SK-N-SH (cell line): ENCODE measurements at regions of chr21 and their contacts with region 1.

Region 1: GRCh38 chr21:42593007-42593806 is 60.2 kb upstream of the PDE9A start:
- DNase-seq: peak; percentile 95
- H3K4me3 ChIP-seq: peak overlapping the region in 1 of 2 experiments; percentile 35; a peak in 1 of 4 replicates
- H3K27ac ChIP-seq: no peak overlapping the region
- H3K4me1 ChIP-seq: peaks cover 0 to 4% of the 10 kb centered on the region in 2 experiments; a peak in 1 of 4 replicates
- H3K27me3 ChIP-seq: no peaks in the 10 kb centered on the region
- CTCF ChIP-seq: no peak; the same call in 1 of the 2 replicates
- EP300 ChIP-seq: no peak
- RAD21 ChIP-seq: peak; percentile 85

Region 2: DNA sequence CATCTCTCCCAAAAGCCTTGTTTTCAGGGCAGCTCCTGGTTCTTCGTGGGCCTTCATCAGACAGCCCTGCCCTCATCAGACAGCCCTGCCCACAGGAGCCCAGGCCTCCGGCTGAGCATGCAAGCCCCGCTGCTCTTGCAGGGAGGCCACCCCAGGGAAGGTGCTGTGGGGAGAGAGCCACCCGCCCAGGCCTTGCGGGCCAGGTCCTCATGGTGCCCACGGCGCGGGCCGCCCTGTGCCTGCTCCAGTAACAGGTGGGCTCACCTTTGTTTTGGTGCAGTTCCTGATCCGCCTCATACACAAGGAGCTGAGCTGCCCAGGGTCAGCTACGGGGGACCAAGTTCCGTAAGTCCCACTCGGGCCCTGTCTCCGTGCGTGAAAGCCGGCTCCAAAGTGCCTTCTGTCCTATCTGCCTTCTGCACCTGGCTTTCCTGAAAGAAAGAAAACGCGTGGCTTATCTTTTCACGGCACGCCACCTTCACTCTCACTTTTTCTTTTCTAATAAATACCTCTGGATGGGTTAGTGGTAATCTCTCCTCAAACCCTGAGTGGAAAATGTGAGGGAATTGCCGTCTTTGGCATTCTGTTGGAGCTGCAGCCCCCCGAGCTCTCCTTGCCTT is 13.6 kb before region 1 on chr21:
- CTCF ChIA-PET with region 1: interaction called, 29 read pairs
- POLR2A ChIA-PET with region 1: no interaction called
- DNase-seq: no peak
- H3K4me3 ChIP-seq: no peak overlapping the region
- H3K27ac ChIP-seq: no peak overlapping the region
- H3K4me1 ChIP-seq: no peaks in the 10 kb centered on the region
- H3K27me3 ChIP-seq: no peaks in the 10 kb centered on the region
- CTCF ChIP-seq: no peak
- EP300 ChIP-seq: no peak
- RAD21 ChIP-seq: no peak

Region 3: DNA sequence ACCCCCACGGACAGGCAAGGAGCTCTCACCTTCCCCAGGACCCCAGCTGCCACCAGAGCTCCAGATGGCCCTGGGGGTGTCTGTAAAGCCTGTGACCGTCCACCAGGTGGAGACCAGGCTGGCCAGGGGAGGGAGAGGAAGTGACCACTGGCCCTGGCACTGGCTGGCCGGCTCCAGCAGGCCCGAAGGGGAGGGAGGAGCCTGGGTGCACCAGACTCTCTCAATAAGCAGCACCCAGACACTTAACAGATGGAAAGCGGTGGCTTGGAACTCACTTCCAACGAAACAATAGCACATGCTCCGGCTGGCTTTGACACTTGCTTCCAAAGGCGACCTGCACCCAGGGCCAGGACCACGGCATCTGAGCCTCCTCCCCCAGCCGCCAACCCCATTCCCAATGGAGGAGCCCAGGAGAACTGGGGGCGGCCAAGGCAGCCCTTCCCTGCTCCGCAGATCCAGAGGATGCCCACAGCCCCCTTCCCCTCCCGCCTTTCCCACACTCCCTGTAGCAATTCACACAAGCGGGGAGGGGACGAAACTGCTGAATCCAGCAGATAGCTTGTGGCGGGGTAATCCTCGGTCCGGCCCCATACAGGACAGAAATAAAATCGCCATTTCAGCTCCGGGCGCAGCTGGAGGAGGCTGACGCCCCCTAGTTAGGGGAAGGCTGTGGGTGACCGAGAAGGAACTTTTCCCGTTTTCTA is 59.5 kb after region 1 on chr21:
- CTCF ChIA-PET with region 1: interaction called, 19 read pairs
- POLR2A ChIA-PET with region 1: no interaction called
- DNase-seq: peak; percentile 98
- H3K4me3 ChIP-seq: peak overlapping the region in 1 of 2 experiments; percentile 43; a peak in 3 of 4 replicates
- H3K27ac ChIP-seq: peak overlapping the region in 1 of 2 experiments; percentile 98; a peak in 2 of 4 replicates
- H3K4me1 ChIP-seq: peaks cover 0 to 33% of the 10 kb centered on the region in 2 experiments; a peak in 1 of 4 replicates
- H3K27me3 ChIP-seq: peaks cover 35% of the 10 kb centered on the region
- CTCF ChIP-seq: peak; percentile 35
- EP300 ChIP-seq: peak in 1 of 2 experiments; percentile 69; a peak in 2 of 4 replicates
- RAD21 ChIP-seq: peak; percentile 74

Region 4: DNA sequence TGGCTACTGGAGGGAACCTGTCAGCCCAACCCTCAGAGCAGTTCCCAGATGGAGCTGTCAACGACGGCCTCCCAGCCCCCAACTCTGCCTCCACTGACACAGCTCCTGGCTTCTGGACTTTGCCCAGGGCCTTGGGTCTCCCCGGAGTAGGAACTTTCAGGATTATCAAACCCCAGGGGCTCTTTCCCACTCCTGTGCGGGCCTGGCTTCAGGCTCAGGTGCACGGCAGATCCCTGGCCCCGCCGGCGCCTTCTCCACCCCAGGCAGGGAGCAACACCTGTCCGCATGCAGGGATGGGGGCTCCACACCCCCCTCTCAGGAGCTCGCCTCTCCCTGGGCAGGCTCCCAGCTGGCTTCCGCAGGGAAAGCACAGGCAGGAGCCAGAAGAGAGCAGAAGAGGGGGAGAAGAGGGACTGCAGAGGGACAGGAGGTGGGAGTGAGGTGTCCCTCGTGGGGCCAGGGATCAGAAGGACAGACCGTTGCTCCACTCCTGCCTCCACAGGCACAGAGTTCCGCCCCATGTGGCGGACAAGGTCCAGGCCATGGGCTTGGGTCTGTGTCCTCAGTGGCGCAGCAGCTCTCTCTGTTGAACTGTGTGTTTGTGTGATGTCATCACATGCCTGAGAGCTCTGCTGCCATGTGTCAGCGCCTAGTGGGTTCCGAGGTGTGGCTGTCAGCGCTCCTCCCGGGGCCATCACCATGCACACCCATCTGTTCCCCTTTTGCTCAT is 167.9 kb after region 1 on chr21:
- CTCF ChIA-PET with region 1: no interaction called
- POLR2A ChIA-PET with region 1: no interaction called
- DNase-seq: no peak
- H3K4me3 ChIP-seq: no peak overlapping the region
- H3K27ac ChIP-seq: no peak overlapping the region
- H3K4me1 ChIP-seq: no peaks in the 10 kb centered on the region
- H3K27me3 ChIP-seq: no peaks in the 10 kb centered on the region
- CTCF ChIP-seq: no peak
- EP300 ChIP-seq: no peak
- RAD21 ChIP-seq: no peak

Region 5: GRCh38 chr21:42827588-42827987 is 234.4 kb after region 1 on chr21:
- CTCF ChIA-PET with region 1: interaction called, 52 read pairs
- POLR2A ChIA-PET with region 1: no interaction called
- DNase-seq: no peak
- H3K4me3 ChIP-seq: no peak overlapping the region
- H3K27ac ChIP-seq: no peak overlapping the region
- H3K4me1 ChIP-seq: peaks cover 0 to under 1% of the 10 kb centered on the region in 2 experiments; a peak in 1 of 4 replicates
- H3K27me3 ChIP-seq: no peaks in the 10 kb centered on the region
- CTCF ChIP-seq: no peak
- EP300 ChIP-seq: no peak
- RAD21 ChIP-seq: no peak